ENCODE measurements at regions of chr12 and their contacts with region 1.

Region 1: GRCh38 chr12:113184900-113185773 is at the starts of genes DDX54 and RITA1:
- DNase-seq: peak; percentile 75 to 94 (median 82)
- ATAC-seq: peak; percentile 81
- H3K4me3 ChIP-seq: peak within 1 kb of the TSS; percentile 94
- H3K4me3 Mint-ChIP-seq: peak within 1 kb of the TSS; percentile 97
- H3K27ac ChIP-seq: peak within 1 kb of the TSS; percentile 95 to 96
- H3K27ac Mint-ChIP-seq: peak within 1 kb of the TSS; percentile 99
- H3K4me1 ChIP-seq: peaks cover 52% of the 10 kb centered on the region
- H3K4me1 Mint-ChIP-seq: peaks cover 40% of the 10 kb centered on the region
- H3K27me3 ChIP-seq: no peaks in the 10 kb centered on the region
- H3K27me3 Mint-ChIP-seq: no peaks in the 10 kb centered on the region
- CTCF ChIP-seq: no peak
- total RNA-seq, gene DDX54: 56.8 to 61.1 TPM
- total RNA-seq, gene RITA1: 2.9 to 3.3 TPM

Region 2: DNA sequence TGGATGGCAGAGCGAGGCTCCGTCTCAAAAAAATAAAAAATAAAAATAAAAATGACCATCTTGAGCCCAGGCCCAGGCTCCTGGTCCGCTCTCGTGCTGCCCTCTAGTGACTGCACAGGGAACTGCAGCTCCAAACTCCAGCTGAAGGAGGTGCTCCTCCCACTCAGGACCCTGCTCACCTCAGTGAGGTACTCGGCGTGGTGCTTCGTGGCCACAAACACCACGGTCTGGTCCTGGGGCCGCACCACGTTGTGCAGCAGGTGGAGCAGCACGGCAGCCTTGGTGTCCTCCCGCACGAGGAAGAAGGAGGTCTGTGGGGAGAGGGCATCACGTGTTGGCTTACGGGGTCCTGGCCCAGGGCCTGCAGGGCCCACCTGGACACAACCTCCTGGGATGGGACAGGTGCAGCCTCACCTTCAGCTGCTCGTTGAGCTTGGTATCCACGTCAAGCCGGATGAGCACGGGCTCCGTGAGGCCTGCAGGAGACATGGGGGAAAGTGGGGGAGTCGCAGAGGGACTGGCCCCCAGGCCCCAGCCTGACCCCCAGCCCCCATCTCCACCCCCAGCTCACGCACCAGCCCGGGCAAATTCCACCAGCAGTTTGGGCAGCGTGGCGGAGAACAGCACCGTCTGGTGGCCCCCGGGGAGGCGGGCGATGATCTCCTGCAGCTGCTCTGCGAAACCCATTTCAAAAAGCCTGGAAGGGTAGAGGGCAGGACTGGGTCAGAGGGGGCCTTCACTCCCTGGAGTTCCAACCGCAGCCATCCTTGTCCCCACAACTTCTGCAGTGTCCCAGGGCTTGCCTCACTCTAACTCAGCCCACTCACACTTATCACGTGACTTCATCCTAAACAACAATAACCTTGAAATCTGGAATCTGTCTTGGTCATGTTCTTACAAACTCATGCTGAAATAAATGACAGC is 10.4 kb before region 1 on chr12:
- CTCF ChIA-PET with region 1: interaction called, 19 read pairs
- POLR2A ChIA-PET with region 1: interaction called, 4 read pairs
- intact Hi-C with region 1: no loop called
- DNase-seq: peak; percentile 67 to 84 (median 73)
- ATAC-seq: peak; percentile 87
- H3K4me3 ChIP-seq: no peak overlapping the region
- H3K4me3 Mint-ChIP-seq: no peak overlapping the region
- H3K27ac ChIP-seq: no peak overlapping the region
- H3K27ac Mint-ChIP-seq: no peak overlapping the region
- H3K4me1 ChIP-seq: no peaks in the 10 kb centered on the region
- H3K4me1 Mint-ChIP-seq: no peaks in the 10 kb centered on the region
- H3K27me3 ChIP-seq: no peaks in the 10 kb centered on the region
- H3K27me3 Mint-ChIP-seq: no peaks in the 10 kb centered on the region
- CTCF ChIP-seq: peak; percentile 100

Region 3: GRCh38 chr12:113221181-113221997 is 36.3 kb after region 1 on chr12 and contains the start of gene TPCN1:
- CTCF ChIA-PET with region 1: no interaction called
- POLR2A ChIA-PET with region 1: interaction called, 24 read pairs
- intact Hi-C with region 1: loop called (anchors 2 to 5 kb)
- DNase-seq: peak; percentile 97 to 100 (median 98)
- ATAC-seq: peak; percentile 91
- H3K4me3 ChIP-seq: peak within 1 kb of the TSS; percentile 91
- H3K4me3 Mint-ChIP-seq: peak within 1 kb of the TSS; percentile 92
- H3K27ac ChIP-seq: peak within 1 kb of the TSS; percentile 61 to 74
- H3K27ac Mint-ChIP-seq: peak within 1 kb of the TSS; percentile 77
- H3K4me1 ChIP-seq: peaks cover 45% of the 10 kb centered on the region
- H3K4me1 Mint-ChIP-seq: peaks cover 47% of the 10 kb centered on the region
- H3K27me3 ChIP-seq: no peaks in the 10 kb centered on the region
- H3K27me3 Mint-ChIP-seq: no peaks in the 10 kb centered on the region
- CTCF ChIP-seq: no peak
- total RNA-seq, gene TPCN1: 52.4 to 59.7 TPM

Region 4: DNA sequence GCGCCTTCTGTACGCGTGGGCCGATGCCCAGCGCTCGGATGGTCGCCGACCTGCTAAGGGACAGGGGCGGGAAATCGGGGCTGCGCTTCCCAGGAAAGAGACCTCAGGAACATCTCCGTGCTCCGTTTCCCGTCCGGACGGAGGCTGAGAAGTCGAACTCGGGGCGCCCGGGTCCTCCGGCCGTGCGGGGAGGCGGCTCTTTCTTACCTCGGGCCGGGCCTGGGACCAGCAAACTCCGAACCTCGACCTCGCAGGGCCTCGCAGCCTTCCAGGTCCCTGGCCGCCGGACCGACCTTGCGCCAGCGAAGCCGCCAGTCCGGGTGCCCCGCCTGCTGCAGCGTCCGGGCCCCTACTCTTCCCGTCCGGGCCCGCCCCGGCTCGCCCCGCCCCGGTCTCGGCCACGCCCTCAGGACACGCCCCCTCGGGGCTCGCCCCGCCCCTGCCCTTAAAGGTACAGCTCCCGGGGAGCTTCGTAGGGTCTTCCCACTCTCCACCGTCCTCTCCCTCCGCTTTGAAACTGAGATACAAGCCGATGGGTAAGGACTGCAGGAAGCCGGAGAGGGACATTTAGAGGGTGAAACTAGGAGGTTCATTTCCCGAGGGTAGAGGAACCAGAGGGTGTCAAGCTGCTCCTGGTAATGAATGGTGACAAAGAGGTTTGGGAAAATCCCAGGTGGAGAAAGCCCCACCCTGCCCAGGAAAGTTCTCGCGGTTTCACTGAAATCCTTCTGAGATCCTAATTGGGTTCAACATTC is 149.8 kb after region 1 on chr12 and contains the start of gene SLC8B1:
- CTCF ChIA-PET with region 1: no interaction called
- POLR2A ChIA-PET with region 1: interaction called, 3 read pairs
- intact Hi-C with region 1: loop called in 1 of 2 experiments (anchors 5 kb)
- DNase-seq: peak; percentile 69 to 95 (median 86)
- ATAC-seq: peak; percentile 97
- H3K4me3 ChIP-seq: peak within 1 kb of the TSS; percentile 94
- H3K4me3 Mint-ChIP-seq: peak within 1 kb of the TSS; percentile 99
- H3K27ac ChIP-seq: peak within 1 kb of the TSS in 1 of 2 donors; percentile 25
- H3K27ac Mint-ChIP-seq: peak within 1 kb of the TSS; percentile 87
- H3K4me1 ChIP-seq: peaks cover 33% of the 10 kb centered on the region
- H3K4me1 Mint-ChIP-seq: peaks cover 45% of the 10 kb centered on the region
- H3K27me3 ChIP-seq: no peaks in the 10 kb centered on the region
- H3K27me3 Mint-ChIP-seq: no peaks in the 10 kb centered on the region
- CTCF ChIP-seq: no peak
- total RNA-seq, gene SLC8B1: 85.3 to 92.7 TPM